ENCODE measurements at regions of chr4 and their contacts with region 1.

Region 1: DNA sequence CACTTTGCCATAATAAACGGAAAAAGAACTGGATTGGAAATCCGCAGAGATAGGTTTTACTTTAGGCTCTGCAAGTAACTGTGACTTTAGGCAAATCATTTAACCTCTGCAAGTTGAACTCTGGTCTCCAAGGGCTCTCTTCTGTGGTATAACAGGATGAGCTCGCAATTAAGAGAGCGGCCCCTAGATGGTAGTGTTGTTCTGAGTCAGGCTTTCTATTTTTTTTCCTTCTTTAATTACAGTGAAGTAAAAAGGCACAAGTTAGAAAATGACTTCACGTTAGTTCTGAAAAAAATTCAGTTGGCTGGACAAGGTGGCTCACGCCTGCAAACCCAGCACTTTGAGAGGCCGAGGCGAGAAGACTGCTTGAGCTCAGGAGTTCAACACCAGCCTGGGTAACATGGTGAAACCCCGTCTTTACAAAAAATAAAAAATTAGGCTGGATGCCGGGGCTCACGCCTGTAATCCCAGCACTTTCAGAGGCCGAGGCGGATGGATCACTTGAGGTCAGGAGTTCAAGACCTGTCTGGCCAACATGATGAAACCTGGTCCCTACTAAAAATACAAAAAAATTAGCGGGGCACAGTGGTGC is 18.0 kb downstream of the RPS3A start:
- DNase-seq: peak in 8 of 9 experiments; percentile 24 to 65 (median 50)
- ATAC-seq: peak; percentile 80
- H3K4me3 ChIP-seq: no peak overlapping the region
- H3K4me3 Mint-ChIP-seq: no peak overlapping the region
- H3K27ac ChIP-seq: no peak overlapping the region
- H3K27ac Mint-ChIP-seq: no peak overlapping the region
- H3K4me1 ChIP-seq: no peaks in the 10 kb centered on the region
- H3K4me1 Mint-ChIP-seq: peaks cover 1% of the 10 kb centered on the region
- H3K27me3 ChIP-seq: no peaks in the 10 kb centered on the region
- H3K27me3 Mint-ChIP-seq: no peaks in the 10 kb centered on the region
- CTCF ChIP-seq: peak; percentile 86

Region 2: DNA sequence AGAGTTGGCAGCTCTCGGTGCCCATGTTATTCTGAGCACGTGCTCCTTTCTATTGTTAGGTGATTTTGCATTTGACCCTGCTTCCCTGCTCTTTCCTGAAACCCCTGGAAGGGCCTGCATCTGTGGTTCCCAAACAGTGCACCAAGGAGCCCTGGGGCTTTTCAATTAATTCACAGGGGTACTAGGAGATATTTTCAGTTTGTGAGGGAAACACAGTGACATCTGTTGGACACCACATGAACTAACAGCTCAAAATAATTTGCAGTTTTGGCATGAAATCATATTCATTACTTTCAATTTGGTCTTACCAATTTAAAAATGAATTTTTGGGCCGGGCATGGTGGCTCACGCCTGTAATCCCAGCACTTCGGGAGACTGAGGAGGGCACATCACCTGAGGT is 486.8 kb after region 1 on chr4:
- CTCF ChIA-PET with region 1: interaction called, 4 read pairs
- POLR2A ChIA-PET with region 1: no interaction called
- intact Hi-C with region 1: loop called in 1 of 2 experiments (anchors 5 kb)
- DNase-seq: no peak
- ATAC-seq: no peak
- H3K4me3 ChIP-seq: no peak overlapping the region
- H3K4me3 Mint-ChIP-seq: no peak overlapping the region
- H3K27ac ChIP-seq: no peak overlapping the region
- H3K27ac Mint-ChIP-seq: no peak overlapping the region
- H3K4me1 ChIP-seq: no peaks in the 10 kb centered on the region
- H3K4me1 Mint-ChIP-seq: no peaks in the 10 kb centered on the region
- H3K27me3 ChIP-seq: no peaks in the 10 kb centered on the region
- H3K27me3 Mint-ChIP-seq: peaks cover 2% of the 10 kb centered on the region
- CTCF ChIP-seq: no peak

Region 3: DNA sequence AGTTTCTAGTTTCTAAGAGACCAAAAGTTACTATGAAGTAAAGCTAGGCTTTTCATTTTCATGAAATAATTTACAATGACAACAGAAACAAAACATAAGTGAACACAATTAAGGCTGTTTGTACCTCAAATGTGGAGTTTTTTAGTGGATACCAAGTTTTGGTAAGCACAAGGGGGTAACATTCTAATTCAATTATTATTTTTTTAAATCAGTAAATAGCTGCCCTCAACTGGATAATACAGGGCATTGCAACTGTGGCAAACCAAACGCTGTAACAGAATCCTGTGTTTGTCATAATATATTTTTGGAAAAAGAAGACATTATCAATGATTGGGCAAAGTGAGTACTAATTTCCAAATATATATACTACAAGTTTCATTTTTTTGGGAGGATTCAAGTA is 1268.1 kb after region 1 on chr4:
- CTCF ChIA-PET with region 1: no interaction called
- POLR2A ChIA-PET with region 1: no interaction called
- intact Hi-C with region 1: loop called in 1 of 2 experiments (anchors 10 kb)
- DNase-seq: peak in 1 of 9 experiments; percentile 29
- ATAC-seq: no peak
- H3K4me3 ChIP-seq: no peak overlapping the region
- H3K4me3 Mint-ChIP-seq: no peak overlapping the region
- H3K27ac ChIP-seq: no peak overlapping the region
- H3K27ac Mint-ChIP-seq: no peak overlapping the region
- H3K4me1 ChIP-seq: peaks cover 12% of the 10 kb centered on the region
- H3K4me1 Mint-ChIP-seq: peaks cover 32% of the 10 kb centered on the region
- H3K27me3 ChIP-seq: no peaks in the 10 kb centered on the region
- H3K27me3 Mint-ChIP-seq: no peaks in the 10 kb centered on the region
- CTCF ChIP-seq: peak; percentile 62

Region 4: GRCh38 chr4:152398060-152398459 is 1280.6 kb after region 1 on chr4:
- CTCF ChIA-PET with region 1: no interaction called
- POLR2A ChIA-PET with region 1: no interaction called
- intact Hi-C with region 1: loop called in 1 of 2 experiments (anchors 5 kb)
- DNase-seq: peak in 1 of 9 experiments; percentile 20
- ATAC-seq: no peak
- H3K4me3 ChIP-seq: no peak overlapping the region
- H3K4me3 Mint-ChIP-seq: no peak overlapping the region
- H3K27ac ChIP-seq: no peak overlapping the region
- H3K27ac Mint-ChIP-seq: no peak overlapping the region
- H3K4me1 ChIP-seq: peaks cover 17% of the 10 kb centered on the region
- H3K4me1 Mint-ChIP-seq: peaks cover 39% of the 10 kb centered on the region
- H3K27me3 ChIP-seq: no peaks in the 10 kb centered on the region
- H3K27me3 Mint-ChIP-seq: no peaks in the 10 kb centered on the region
- CTCF ChIP-seq: peak; percentile 31